ENCODE measurements at regions of chr9 and their contacts with region 1.

Region 1: DNA sequence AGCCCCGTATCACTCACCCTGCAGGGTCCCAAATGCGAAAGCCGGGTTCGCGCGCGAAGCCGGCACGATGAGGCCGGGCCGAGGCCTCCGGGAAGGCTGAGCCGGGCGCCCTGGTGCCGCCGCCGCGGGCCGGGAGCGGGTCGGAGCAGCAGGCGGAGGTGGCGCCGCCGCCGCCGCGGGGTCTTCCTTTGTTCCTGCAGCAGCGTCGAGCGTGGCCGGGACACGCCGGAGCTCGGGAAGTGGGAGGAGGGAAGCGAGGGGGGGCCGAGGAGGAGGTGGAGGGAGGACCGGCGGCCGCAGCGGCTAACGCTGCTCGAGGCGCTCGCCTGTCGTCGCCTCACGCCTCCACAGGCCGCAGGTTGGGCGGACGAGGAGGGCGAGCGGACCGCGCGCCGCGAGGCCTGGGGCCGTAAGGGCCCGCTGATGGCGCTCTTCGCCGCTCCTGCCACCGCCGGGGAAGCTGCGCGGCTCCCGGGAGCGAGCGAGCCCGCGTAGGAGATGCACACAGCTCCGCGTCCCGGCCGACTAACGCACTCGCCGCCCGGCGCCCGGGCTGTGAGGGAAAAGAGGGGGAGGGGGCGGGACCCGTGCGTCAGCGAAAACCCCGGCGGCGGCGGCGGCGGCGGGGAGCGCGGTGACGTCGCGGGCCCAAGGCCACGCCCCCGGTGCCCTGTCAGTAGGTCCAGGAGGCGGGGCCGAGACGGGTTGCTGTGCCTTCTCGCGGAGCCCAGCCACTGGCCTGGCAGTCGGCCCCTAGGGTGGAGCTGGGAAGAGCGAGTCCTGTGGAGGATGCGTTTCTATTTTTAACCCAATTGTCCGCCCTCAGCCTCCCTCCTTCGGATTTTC is at the start of gene ZFAND5:
- DNase-seq: peak; percentile 96 to 99
- H3K4me3 ChIP-seq: peak within 1 kb of the TSS; percentile 92 to 99
- H3K27ac ChIP-seq: peak within 1 kb of the TSS; percentile 100
- H3K4me1 ChIP-seq: peaks cover 0 to 11% of the 10 kb centered on the region in 2 donors
- H3K27me3 ChIP-seq: no peaks in the 10 kb centered on the region
- CTCF ChIP-seq: no peak
- total RNA-seq, gene ZFAND5: 189 TPM

Region 2: GRCh38 chr9:70587201-70587600 is 1777.7 kb before region 1 on chr9:
- intact Hi-C with region 1: loop called (anchors 5 kb)
- DNase-seq: peak in 1 of 2 donors; percentile 78
- H3K4me3 ChIP-seq: no peak overlapping the region
- H3K27ac ChIP-seq: peak overlapping the region; percentile 91 to 93
- H3K4me1 ChIP-seq: peaks cover 10 to 54% of the 10 kb centered on the region in 2 donors
- H3K27me3 ChIP-seq: no peaks in the 10 kb centered on the region
- CTCF ChIP-seq: peak in 1 of 3 experiments; percentile 6

Region 3: DNA sequence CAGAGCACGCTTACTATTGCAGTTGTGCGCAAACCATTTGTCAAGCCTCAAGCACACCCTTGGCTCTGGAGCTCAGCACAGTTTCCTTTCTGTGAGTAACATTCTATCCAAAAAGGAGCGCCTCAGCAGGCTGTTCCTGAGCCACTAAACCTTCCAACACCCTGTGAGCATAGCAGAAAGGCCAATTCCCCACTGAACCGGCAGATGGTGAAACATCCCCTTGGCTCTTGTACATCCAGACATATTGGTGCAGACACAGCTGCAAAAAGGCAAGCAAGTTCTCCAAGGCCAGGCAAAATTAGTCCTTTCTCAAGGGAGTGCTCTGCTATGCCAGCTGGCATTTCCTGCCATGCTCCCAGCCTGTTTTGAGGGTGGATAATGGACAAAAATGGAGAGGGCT is 552.5 kb before region 1 on chr9:
- intact Hi-C with region 1: loop called (anchors 5 kb)
- DNase-seq: peak in 1 of 2 donors; percentile 82
- H3K4me3 ChIP-seq: no peak overlapping the region
- H3K27ac ChIP-seq: peak overlapping the region; percentile 52 to 67
- H3K4me1 ChIP-seq: peaks cover 3 to 30% of the 10 kb centered on the region in 2 donors
- H3K27me3 ChIP-seq: no peaks in the 10 kb centered on the region
- CTCF ChIP-seq: peak; percentile 9 to 44 (median 40)

Region 4: DNA sequence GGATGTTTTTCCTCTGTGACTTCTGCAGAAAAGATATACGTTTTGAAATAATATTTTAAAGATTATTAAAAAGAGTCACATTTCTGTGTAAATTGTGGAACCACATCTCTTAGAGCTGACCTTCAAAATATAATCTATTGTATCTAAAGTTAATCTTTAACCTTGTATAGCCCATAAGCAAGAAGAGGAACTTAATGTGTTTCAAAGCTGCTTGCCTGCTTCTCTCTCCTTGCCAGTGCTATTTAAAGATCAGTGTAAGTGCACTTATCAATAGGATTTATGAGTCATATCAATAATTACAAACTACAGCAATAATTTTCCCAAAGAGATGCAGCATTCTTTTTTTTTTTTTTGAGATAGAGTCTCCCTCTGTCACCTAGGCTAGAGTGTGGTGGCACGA is 245.0 kb before region 1 on chr9:
- intact Hi-C with region 1: no loop called
- DNase-seq: no peak
- H3K4me3 ChIP-seq: no peak overlapping the region
- H3K27ac ChIP-seq: no peak overlapping the region
- H3K4me1 ChIP-seq: no peaks in the 10 kb centered on the region
- H3K27me3 ChIP-seq: no peaks in the 10 kb centered on the region
- CTCF ChIP-seq: no peak

Region 5: GRCh38 chr9:72292256-72292682 is 72.6 kb before region 1 on chr9:
- intact Hi-C with region 1: loop called (anchors 5 kb)
- DNase-seq: no peak
- H3K4me3 ChIP-seq: no peak overlapping the region
- H3K27ac ChIP-seq: no peak overlapping the region
- H3K4me1 ChIP-seq: no peaks in the 10 kb centered on the region
- H3K27me3 ChIP-seq: no peaks in the 10 kb centered on the region
- CTCF ChIP-seq: peak; percentile 36 to 61 (median 52)

Region 6: GRCh38 chr9:72554221-72554641 is 189.3 kb after region 1 on chr9:
- intact Hi-C with region 1: no loop called
- DNase-seq: no peak
- H3K4me3 ChIP-seq: peak overlapping the region in 1 of 2 donors; percentile 22
- H3K27ac ChIP-seq: peak overlapping the region; percentile 48 to 58
- H3K4me1 ChIP-seq: peaks cover 0 to 4% of the 10 kb centered on the region in 2 donors
- H3K27me3 ChIP-seq: no peaks in the 10 kb centered on the region
- CTCF ChIP-seq: no peak

Region 7: DNA sequence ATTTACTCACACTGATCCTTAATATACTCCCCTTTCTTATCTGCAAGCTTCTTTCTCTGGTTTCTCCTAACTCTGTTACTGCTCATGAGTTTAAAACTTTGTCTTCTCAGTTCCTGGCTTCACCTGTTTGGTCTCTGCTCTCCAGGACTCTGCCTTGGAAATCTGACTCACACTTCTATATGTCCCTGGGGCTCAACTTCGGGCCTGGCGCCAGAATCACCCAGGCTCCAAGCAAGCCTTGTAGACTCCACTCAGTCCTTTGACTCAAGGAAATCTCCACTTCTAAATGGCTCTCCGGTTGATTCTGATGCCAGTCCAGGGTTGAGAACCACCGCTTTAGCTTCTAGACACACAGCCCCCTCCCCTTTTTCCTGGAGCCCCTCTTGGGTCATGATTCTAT is 214.3 kb after region 1 on chr9:
- intact Hi-C with region 1: loop called (anchors 2 kb)
- DNase-seq: no peak
- H3K4me3 ChIP-seq: no peak overlapping the region
- H3K27ac ChIP-seq: peak overlapping the region; percentile 50 to 54
- H3K4me1 ChIP-seq: peaks cover 3 to 16% of the 10 kb centered on the region in 2 donors
- H3K27me3 ChIP-seq: no peaks in the 10 kb centered on the region
- CTCF ChIP-seq: no peak

Region 8: DNA sequence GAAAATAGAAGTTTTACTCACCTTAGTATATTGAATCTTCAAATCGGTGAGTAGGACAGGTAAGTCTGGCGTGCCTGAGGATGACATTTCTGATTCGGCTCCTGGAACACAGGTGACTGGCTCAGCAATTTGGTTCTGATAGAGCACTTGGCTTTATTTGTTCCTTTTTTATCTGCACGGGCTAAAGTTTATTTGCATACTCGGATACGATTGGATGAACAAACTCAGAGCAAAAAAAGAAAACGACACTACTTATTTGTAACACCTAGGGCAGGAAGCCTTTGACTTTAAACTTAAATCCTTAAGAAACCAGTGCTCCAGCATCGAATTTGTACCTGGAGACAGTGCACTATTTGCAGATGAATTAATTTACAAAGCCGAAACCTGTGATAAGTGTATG is 588.0 kb after region 1 on chr9 and contains the start of gene ALDH1A1:
- intact Hi-C with region 1: loop called (anchors 10 kb)
- DNase-seq: no peak
- H3K4me3 ChIP-seq: peak within 1 kb of the TSS; percentile 51 to 69
- H3K27ac ChIP-seq: peak within 1 kb of the TSS; percentile 76 to 91
- H3K4me1 ChIP-seq: peaks cover 0 to 4% of the 10 kb centered on the region in 2 donors
- H3K27me3 ChIP-seq: no peaks in the 10 kb centered on the region
- CTCF ChIP-seq: no peak
- total RNA-seq, gene ALDH1A1: 43.9 TPM

Region 9: GRCh38 chr9:73149371-73150067 is 784.6 kb after region 1 on chr9:
- intact Hi-C with region 1: loop called (anchors 10 kb)
- DNase-seq: no peak
- H3K4me3 ChIP-seq: peak overlapping the region; percentile 12 to 45
- H3K27ac ChIP-seq: peak overlapping the region; percentile 70 to 81
- H3K4me1 ChIP-seq: peaks cover 16 to 37% of the 10 kb centered on the region in 2 donors
- H3K27me3 ChIP-seq: no peaks in the 10 kb centered on the region
- CTCF ChIP-seq: no peak

Measured in ascending aorta (tissue), 2 donors.